ENCODE measurements at regions of chrX and their contacts with region 1.

Region 1: GRCh38 chrX:110402479-110403230 is 44.0 kb downstream of the RTL9 start:
- DNase-seq: no peak
- CTCF ChIP-seq: no peak

Region 2: DNA sequence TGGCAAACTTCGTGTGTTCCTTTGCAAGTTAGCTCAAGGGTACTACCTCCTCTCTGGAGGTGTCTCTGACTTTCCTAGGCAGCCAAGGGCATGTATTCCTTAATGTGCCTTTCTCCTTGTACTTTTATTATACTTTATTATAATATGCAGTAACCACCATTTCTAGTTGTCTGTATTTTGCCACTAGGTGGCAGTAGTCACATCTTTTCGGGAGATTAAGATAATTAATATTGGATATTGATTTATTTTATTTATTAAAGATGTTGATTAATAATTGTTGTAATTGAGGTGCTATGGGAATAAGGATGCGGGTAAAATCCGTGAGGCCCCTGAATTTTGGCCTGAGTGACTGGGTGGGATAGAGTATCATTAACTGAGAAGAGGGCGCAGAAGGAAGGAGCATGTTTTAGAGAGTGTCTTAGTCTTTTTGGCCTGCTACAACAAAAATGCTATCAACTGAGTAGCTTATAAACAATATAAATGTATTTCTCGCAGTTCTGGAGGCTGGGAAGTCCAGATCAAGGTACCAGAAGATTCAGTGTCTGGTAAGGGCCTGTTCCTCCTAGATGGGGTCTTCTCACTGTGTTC is 246.4 kb before region 1 on chrX:
- in situ Hi-C with region 1: loop called (anchors 5 kb)
- DNase-seq: no peak
- CTCF ChIP-seq: no peak

Region 3: DNA sequence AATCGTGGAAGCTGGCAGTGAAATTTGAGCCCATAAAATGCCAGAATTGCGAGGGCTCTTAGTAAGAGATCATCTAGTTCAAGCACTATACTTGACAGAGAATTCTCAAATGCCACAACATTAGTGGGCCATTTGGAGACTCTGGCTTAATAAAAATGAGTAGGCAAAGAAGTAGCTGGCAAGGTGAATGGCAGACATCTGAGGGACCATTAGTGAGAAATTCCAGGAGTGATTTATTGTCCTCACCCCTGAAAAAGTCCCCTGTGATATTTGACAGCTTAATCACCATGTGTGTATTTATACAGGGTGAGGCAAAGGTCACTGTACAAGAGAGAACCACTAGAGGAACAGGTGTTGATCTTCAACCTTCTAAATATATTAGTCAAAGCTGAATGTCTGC is 185.5 kb after region 1 on chrX:
- in situ Hi-C with region 1: no loop called
- DNase-seq: no peak
- CTCF ChIP-seq: no peak